ENCODE measurements at regions of chr2 and their contacts with region 1.

Region 1: DNA sequence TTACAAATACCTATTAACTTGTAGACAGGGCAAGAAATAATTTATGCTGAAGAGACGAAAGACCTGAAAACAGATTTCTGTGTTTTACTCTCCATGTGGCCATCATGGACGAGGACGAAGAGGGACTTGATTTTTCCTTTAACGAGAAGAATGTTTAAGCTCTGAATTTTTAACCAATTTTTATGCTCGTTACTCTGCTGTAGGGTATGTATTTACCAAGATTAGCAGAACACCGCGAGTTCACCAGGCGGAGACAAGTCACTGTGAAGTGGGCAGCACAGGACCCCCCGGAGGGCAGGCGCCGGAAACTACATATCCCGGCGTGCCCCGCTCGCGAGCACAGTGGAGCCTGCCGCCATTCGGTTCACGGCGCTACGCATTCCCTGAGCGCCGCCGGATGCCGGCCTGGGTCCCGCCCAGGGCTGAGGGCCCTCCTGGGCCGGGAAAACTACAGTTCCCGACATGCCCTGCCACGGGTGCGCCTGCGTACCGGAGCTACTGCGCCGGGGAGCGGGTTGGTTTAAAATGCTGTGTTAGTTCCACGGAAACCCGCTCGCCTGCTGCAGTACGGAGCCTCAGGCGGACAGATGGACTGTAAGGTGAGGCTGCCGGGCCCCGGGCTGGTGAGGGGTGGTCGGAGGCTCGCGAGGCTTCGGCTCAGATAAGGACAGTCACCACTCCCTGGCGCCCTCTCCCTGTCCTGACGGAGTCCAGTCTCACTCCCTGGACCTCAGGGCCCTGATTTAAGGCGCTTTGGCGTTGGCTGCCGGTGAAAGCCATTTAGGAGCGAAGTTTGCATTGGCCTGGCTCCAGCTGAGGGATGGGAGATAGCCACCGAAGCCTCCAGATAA is at the start of gene CCDC150:
- DNase-seq: peak; percentile 93
- H3K4me3 Mint-ChIP-seq: peak within 1 kb of the TSS; percentile 78
- H3K27ac Mint-ChIP-seq: peak within 1 kb of the TSS; percentile 81
- H3K4me1 Mint-ChIP-seq: peaks cover 28% of the 10 kb centered on the region
- H3K27me3 Mint-ChIP-seq: peaks cover 13% of the 10 kb centered on the region
- total RNA-seq, gene CCDC150: 16.7 and 19.6 TPM in 2 replicates

Region 2: DNA sequence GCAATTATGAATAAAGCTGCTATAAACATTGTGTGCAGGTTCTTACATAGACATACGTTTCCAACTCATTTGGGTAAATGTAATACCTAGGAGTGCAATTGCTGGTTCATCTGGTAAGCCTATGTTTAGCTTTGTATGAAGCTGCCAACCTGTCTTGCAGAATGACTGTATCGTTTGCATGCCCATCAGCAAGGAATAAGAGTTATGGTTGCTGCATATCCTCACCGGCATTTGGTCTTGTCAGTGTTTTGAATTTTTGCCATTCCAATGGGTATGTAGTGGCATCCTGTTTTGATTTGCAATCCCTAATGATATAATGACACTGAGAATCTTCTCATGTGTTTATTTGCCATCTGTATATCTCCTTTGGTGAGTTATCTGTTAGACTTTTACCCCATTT is 20.8 kb after region 1 on chr2:
- intact Hi-C with region 1: no loop called
- DNase-seq: no peak
- H3K4me3 Mint-ChIP-seq: no peak overlapping the region
- H3K27ac Mint-ChIP-seq: no peak overlapping the region
- H3K4me1 Mint-ChIP-seq: no peaks in the 10 kb centered on the region
- H3K27me3 Mint-ChIP-seq: no peaks in the 10 kb centered on the region

Region 3: DNA sequence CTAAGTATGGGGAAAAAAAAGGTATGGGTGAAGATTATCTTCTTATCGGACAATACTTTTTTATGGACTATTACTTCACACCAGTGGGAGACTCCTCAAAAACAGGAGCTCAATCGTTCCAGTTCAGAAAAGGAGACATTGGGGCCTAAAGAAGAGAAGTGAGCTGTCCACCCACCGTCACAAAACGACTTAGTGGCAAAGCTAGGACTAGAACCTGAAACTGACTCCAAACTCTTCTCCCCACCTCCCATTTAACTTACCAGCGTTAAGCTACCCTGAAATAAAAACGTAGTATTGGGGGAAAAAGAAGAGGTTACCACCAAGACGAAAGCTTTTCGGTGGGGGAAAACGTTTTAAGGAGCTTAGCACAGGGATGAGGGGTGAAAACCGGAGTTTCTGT is 159.6 kb after region 1 on chr2:
- intact Hi-C with region 1: loop called (anchors 1 kb)
- DNase-seq: no peak
- H3K4me3 Mint-ChIP-seq: peak overlapping the region; percentile 96
- H3K27ac Mint-ChIP-seq: peak overlapping the region; percentile 93
- H3K4me1 Mint-ChIP-seq: peaks cover 31% of the 10 kb centered on the region
- H3K27me3 Mint-ChIP-seq: peaks cover 2% of the 10 kb centered on the region

Region 4: DNA sequence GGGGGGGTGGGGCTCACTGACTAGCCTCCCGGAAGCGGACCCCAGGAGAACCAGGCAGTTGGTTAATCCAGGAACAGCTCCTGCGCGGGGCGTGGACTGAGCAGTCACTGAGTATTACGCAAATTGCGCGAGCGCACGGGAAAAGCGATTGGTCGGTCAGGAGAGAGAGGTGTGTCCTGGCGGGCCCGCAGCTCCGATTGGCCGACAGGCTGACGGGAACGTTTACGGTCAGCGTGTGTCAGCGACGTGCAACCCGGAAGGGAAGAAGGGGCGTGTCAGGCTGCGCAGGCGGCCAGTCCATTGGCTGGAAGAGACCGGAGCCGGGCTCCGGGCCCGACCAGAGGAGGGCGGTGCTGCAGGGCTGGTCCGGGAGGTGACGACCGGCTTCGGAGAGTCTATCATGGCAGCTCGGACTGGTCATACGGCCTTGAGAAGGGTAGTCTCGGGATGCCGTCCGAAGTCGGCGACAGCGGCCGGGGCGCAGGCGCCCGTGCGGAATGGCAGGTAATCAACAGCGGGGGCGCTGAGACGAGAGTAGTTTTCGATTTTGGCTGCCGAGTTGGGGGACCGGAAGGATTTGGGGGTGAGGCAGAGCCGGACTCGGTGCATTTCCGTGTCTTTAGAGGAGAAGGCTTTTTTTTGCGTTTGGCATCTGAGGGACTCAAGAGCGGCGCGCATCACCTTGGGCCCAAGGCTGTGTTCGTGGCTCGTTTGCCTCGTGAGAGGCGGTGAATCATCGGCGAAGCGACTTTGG is 813.9 kb after region 1 on chr2 and contains the start of gene COQ10B:
- intact Hi-C with region 1: loop called (anchors 1 kb)
- DNase-seq: peak; percentile 99
- H3K4me3 Mint-ChIP-seq: peak within 1 kb of the TSS; percentile 99
- H3K27ac Mint-ChIP-seq: peak within 1 kb of the TSS; percentile 100
- H3K4me1 Mint-ChIP-seq: peaks cover 40% of the 10 kb centered on the region
- H3K27me3 Mint-ChIP-seq: no peaks in the 10 kb centered on the region
- total RNA-seq, gene COQ10B: 26.9 and 28.8 TPM in 2 replicates